ENCODE measurements at regions of chr2 and their contacts with region 1.

Region 1: GRCh38 chr2:85772019-85772745 is 18.4 kb downstream of the ATOH8 start:
- DNase-seq: peak; percentile 98
- H3K4me3 Mint-ChIP-seq: peak overlapping the region; percentile 17
- H3K27ac Mint-ChIP-seq: peak overlapping the region; percentile 77
- H3K4me1 Mint-ChIP-seq: peaks cover 34% of the 10 kb centered on the region
- H3K27me3 Mint-ChIP-seq: no peaks in the 10 kb centered on the region
- CTCF ChIP-seq: peak; percentile 5

Region 2: GRCh38 chr2:85741833-85742455 is 30.2 kb before region 1 on chr2:
- CTCF ChIA-PET with region 1: interaction called, 13 read pairs
- POLR2A ChIA-PET with region 1: interaction called, 13 read pairs
- intact Hi-C with region 1: no loop called
- DNase-seq: peak; percentile 58
- H3K4me3 Mint-ChIP-seq: peak overlapping the region; percentile 11
- H3K27ac Mint-ChIP-seq: peak overlapping the region; percentile 91
- H3K4me1 Mint-ChIP-seq: peaks cover 29% of the 10 kb centered on the region
- H3K27me3 Mint-ChIP-seq: peaks cover 19% of the 10 kb centered on the region
- CTCF ChIP-seq: no peak

Region 3: DNA sequence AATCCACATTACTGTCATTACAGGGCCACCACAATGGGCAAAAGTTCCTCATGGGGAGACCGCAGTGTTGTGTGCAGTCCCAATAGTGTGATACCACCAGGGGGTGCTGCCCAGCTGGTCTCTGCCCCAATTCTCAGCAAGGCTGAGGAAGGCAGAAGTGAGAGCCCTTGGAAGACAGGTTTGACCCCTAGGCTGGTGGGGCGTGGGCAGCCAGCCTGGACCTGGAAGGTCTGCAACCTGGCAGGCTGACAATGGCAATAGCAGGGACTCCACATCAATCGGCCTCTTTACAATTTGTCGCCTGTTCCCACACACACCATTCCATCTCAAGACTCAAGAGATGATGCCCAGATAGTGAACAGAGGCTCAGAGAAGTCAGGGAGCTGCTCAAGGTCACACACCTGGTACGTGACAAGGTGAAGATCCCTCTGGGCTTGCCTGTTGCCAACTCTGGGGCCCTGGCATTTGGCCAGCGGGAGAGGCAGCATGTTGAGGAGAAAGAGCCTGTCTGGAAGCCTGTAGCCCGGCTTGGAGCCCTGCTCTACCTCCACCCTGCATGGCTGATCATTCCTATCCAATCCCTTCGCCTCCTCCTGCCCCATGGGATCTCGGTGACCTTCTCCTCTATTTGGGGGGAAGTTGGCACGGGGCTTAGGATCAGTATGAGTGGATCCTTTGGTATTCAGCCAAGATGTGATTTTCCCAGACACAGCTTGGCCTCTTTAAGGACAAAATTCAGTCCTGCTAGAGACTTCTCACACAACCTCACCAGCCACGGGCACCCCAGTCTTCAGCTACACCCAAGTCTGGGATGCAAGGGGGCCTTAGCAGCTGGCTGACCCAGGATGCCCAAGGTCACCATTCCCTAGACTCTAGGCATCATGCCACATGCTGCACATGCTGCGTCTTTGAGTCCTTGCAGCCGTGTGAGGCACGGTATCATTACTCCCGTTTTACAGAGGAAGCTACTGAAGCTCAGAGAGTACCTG is 21.3 kb before region 1 on chr2:
- CTCF ChIA-PET with region 1: interaction called, 25 read pairs
- POLR2A ChIA-PET with region 1: interaction called, 7 read pairs
- intact Hi-C with region 1: no loop called
- DNase-seq: peak; percentile 73
- H3K4me3 Mint-ChIP-seq: no peak overlapping the region
- H3K27ac Mint-ChIP-seq: no peak overlapping the region
- H3K4me1 Mint-ChIP-seq: peaks cover 9% of the 10 kb centered on the region
- H3K27me3 Mint-ChIP-seq: peaks cover 66% of the 10 kb centered on the region
- CTCF ChIP-seq: peak; percentile 83

Region 4: DNA sequence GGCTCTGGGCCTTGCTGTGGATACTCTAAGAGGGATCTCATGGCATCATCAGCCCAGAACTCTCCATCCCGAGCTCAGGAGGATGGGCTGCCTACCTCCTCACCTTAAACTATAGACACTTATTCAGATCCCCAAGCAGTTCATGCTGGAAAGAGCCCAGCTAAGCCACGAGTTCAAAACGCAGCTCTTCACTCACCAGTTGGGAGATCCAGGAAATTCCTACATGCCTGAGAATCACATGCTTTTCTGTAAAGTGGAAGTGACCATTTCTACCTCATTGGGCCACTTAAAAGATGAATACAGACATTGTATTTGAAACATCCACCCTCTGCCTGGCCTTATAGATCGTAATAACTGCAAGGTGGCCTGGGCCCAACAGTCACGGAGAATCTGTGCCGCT is 11.8 kb before region 1 on chr2:
- CTCF ChIA-PET with region 1: interaction called, 21 read pairs
- POLR2A ChIA-PET with region 1: interaction called, 23 read pairs
- intact Hi-C with region 1: no loop called
- DNase-seq: no peak
- H3K4me3 Mint-ChIP-seq: no peak overlapping the region
- H3K27ac Mint-ChIP-seq: no peak overlapping the region
- H3K4me1 Mint-ChIP-seq: peaks cover 15% of the 10 kb centered on the region
- H3K27me3 Mint-ChIP-seq: peaks cover 17% of the 10 kb centered on the region
- CTCF ChIP-seq: no peak

Region 5: DNA sequence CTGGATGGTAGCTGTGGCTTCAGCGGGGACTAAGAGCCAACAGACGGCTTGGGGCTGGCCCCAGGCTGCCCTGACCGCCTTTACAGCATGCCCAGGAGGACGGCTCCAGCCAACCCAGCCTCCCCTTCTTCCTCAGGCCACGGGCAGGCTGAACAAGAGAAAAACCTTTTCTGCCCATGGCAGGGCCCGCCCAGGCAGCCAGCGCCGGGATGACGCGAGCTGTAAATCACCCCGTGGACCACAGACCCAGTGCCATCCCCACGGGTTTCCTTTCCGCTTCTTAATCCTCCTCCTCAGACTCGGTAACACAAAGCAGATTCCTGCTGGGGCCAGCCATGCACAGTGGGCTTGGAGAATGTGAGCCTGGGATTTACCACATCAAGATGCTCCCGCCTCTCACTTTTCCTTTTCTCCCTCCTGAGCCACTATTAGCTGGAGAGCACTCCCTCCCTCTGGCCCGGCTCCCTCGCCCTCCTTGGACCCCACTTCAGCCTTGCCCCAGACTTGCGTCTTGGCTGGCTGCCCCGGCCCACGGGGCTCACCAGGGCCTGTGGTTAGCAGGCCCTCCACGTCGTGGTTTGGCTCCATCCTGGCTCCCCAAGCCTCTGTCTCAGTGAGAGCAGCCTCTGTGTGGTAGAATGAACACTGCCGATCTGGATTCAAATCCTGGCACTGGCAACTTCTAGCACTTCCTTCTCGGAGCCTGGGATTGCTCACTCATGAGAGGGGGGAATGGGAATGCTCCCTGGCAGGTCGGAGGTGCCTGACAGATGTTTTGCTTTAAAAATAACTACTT is 13.0 kb after region 1 on chr2:
- CTCF ChIA-PET with region 1: interaction called, 4 read pairs
- POLR2A ChIA-PET with region 1: interaction called, 22 read pairs
- intact Hi-C with region 1: no loop called
- DNase-seq: no peak
- H3K4me3 Mint-ChIP-seq: no peak overlapping the region
- H3K27ac Mint-ChIP-seq: no peak overlapping the region
- H3K4me1 Mint-ChIP-seq: no peaks in the 10 kb centered on the region
- H3K27me3 Mint-ChIP-seq: peaks cover 17% of the 10 kb centered on the region
- CTCF ChIP-seq: no peak

Region 6: DNA sequence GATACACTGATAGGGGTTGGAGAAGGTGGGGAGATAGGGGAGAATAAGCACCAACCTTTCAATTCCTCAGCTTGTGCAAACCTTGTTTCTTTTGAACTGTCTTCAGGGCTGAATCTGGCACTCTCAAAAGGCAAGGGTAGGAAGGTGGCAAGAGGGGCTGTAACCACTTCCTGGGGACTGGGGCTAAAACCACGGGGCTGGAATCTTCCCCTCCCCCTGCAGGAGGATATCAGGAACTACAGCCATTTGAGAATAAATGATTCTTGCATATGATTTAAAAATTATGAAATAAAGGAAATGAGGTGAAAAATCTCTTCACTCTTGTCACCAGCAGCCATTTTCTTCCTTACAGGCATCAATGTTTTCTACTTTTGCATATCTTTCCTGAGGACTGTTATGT is 32.4 kb after region 1 on chr2:
- CTCF ChIA-PET with region 1: interaction called, 10 read pairs
- POLR2A ChIA-PET with region 1: interaction called, 5 read pairs
- intact Hi-C with region 1: loop called (anchors 1 kb)
- DNase-seq: peak; percentile 51
- H3K4me3 Mint-ChIP-seq: no peak overlapping the region
- H3K27ac Mint-ChIP-seq: no peak overlapping the region
- H3K4me1 Mint-ChIP-seq: peaks cover 7% of the 10 kb centered on the region
- H3K27me3 Mint-ChIP-seq: no peaks in the 10 kb centered on the region
- CTCF ChIP-seq: peak; percentile 60

Measured in MCF 10A (cell line).